Activated CD4-positive, alpha-beta memory T cell treated with anti-CD3 and anti-CD28 coated beads for 36 hours (primary cell): ENCODE measurements at regions of chr10 and their contacts with region 1.

Region 1: DNA sequence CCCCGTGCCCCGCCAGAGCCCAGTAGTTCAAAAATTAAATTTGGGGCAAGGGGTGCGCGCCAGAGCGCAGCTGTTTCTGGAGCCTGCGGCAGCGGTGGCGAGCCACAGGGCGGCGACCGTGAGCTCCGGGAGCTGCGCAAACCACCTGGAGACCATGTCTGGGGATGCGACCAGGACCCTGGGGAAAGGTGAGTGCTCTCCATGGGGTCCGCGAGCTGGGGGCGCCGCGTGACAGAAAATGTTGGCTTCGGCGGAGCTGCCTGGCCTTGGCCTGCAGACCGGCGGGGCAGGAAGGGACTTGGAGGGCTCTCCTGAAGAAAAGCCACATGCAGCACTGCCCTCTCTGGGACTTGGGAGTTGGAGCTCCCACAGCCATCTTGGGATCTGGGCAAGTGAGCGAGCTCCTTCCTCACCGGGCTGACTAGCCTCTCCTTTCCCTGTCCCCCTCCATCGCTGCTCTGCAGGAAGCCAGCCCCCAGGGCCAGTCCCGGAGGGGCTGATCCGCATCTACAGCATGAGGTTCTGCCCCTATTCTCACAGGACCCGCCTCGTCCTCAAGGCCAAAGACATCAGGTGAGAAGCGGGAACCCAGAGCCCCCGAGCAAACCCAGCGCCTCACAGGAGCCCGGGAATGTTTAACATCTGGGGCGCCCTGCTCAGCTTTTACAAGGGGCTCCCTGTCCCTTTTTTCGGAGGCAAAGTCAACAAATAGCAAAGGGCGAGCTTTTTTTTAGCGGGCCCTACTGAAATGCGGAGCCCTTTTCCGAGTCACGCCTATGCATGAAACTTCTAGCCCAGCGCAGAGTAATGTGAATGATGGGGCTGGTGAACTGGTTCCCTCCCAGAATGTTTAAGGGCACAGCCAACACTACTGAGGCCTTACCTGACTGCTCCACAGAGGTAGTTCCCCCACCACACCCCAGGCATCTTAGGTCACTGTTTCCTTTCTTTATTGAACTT is 6.1 kb downstream of the GSTO2 start:
- DNase-seq: peak; percentile 65
- H3K4me3 Mint-ChIP-seq: peak overlapping the region; percentile 26
- H3K27ac Mint-ChIP-seq: no peak overlapping the region
- H3K4me1 Mint-ChIP-seq: peaks cover 4% of the 10 kb centered on the region
- H3K27me3 Mint-ChIP-seq: peaks cover 7% of the 10 kb centered on the region

Region 2: GRCh38 chr10:104254493-104255310 is 20.3 kb before region 1 on chr10 and contains the start of gene GSTO1:
- CTCF ChIA-PET with region 1: interaction called, 48 read pairs
- POLR2A ChIA-PET with region 1: interaction called, 3 read pairs
- intact Hi-C with region 1: no loop called
- DNase-seq: peak; percentile 73
- H3K4me3 Mint-ChIP-seq: peak within 1 kb of the TSS; percentile 93
- H3K27ac Mint-ChIP-seq: peak within 1 kb of the TSS; percentile 93
- H3K4me1 Mint-ChIP-seq: peaks cover 50% of the 10 kb centered on the region
- H3K27me3 Mint-ChIP-seq: peaks cover 3% of the 10 kb centered on the region
- total RNA-seq, gene GSTO1: 215 to 225 TPM

Region 3: DNA sequence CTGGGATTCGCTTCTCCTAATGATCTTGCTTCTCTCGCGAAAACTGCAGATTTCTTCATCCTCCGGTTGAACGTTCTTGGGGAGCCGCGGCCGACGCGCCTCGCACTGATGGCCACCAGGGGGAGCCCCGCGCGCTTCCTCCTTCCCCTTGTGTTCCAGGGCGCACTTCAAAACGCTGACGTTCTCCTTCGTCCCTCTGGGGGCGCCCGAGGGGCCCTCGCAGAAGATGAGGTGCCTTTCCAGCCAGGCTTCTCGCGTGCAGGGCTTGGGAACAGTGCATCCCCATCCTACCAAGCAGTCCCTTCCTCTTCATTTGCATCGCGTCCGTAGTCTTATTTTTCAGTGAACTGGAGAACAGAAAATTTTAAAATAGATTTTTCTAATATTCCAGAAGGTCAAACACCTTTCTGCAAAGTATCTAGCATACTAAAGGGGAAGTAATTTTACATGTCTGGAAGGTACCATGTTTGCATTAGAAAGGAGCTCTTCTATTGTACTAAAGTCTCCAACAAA is 16.5 kb after region 1 on chr10:
- CTCF ChIA-PET with region 1: interaction called, 193 read pairs
- POLR2A ChIA-PET with region 1: interaction called, 3 read pairs
- intact Hi-C with region 1: no loop called
- DNase-seq: peak; percentile 92
- H3K4me3 Mint-ChIP-seq: peak overlapping the region; percentile 39
- H3K27ac Mint-ChIP-seq: no peak overlapping the region
- H3K4me1 Mint-ChIP-seq: peaks cover 12% of the 10 kb centered on the region
- H3K27me3 Mint-ChIP-seq: peaks cover 23% of the 10 kb centered on the region

Region 4: GRCh38 chr10:104308439-104308903 is 33.4 kb after region 1 on chr10:
- CTCF ChIA-PET with region 1: interaction called, 43 read pairs
- POLR2A ChIA-PET with region 1: no interaction called
- intact Hi-C with region 1: no loop called
- DNase-seq: peak; percentile 54
- H3K4me3 Mint-ChIP-seq: no peak overlapping the region
- H3K27ac Mint-ChIP-seq: peak overlapping the region; percentile 44
- H3K4me1 Mint-ChIP-seq: peaks cover 49% of the 10 kb centered on the region
- H3K27me3 Mint-ChIP-seq: peaks cover 5% of the 10 kb centered on the region

Region 5: GRCh38 chr10:104345941-104346340 is 70.9 kb after region 1 on chr10:
- CTCF ChIA-PET with region 1: interaction called, 55 read pairs
- POLR2A ChIA-PET with region 1: no interaction called
- intact Hi-C with region 1: no loop called
- DNase-seq: no peak
- H3K4me3 Mint-ChIP-seq: no peak overlapping the region
- H3K27ac Mint-ChIP-seq: peak overlapping the region; percentile 47
- H3K4me1 Mint-ChIP-seq: peaks cover 10% of the 10 kb centered on the region
- H3K27me3 Mint-ChIP-seq: no peaks in the 10 kb centered on the region